Activated B cell treated with CpG ODN at 0.5 μM for 24 hours (primary cell): ENCODE measurements at regions of chr14 and their contacts with region 1.

Region 1: DNA sequence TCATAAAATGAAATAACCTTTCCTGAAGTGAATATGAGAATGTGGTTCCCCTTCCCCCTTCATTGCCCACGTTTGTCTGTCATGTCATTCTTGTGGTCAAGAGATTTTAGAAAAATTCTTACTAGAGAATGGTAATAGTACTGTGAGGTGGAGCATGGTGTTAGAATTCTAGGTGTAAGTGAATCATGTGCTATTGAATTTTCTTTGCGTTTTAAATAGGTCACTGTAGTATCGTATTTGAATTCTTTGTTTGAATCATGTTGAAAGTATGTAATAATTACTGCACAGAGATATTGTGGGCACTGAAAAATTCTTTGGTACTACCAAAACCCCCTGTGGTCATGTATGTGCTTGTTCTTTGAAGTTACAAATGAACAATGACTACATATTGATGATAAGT is 49.9 kb downstream of the FUT8 start:
- DNase-seq: no peak
- ATAC-seq: peak; percentile 53
- H3K4me3 Mint-ChIP-seq: peak overlapping the region; percentile 50
- H3K27ac Mint-ChIP-seq: peak overlapping the region; percentile 85
- H3K4me1 Mint-ChIP-seq: peaks cover 51% of the 10 kb centered on the region
- H3K27me3 Mint-ChIP-seq: no peaks in the 10 kb centered on the region
- CTCF ChIP-seq: no peak

Region 2: DNA sequence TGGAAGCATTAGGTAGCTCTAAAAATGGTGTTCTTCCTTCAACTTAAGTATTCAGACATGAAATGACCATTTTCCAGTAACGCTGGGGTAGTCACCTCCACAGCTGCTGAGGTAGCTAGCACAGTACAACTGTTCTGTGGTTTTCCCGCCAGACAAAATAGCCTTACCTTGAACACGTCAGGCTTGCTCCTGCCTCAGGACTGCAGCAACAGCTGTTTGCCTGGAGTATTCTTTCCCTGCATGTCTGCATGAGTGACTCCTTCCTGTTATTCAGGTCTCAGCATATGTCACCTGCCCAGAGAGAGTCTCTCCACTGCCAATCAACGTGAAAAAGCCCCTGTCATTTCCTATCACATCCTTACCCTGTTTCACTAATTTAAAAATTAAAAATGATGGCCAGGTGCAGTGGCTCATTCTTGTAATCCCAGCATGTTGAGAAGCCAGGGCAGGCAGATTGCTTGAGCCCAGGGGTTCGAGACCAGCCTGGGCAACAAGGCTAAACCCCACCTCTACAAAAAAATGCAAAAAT is 1858.6 kb before region 1 on chr14:
- CTCF ChIA-PET with region 1: no interaction called
- POLR2A ChIA-PET with region 1: no interaction called
- intact Hi-C with region 1: no loop called
- DNase-seq: no peak
- ATAC-seq: no peak
- H3K4me3 Mint-ChIP-seq: no peak overlapping the region
- H3K27ac Mint-ChIP-seq: no peak overlapping the region
- H3K4me1 Mint-ChIP-seq: peaks cover 7% of the 10 kb centered on the region
- H3K27me3 Mint-ChIP-seq: no peaks in the 10 kb centered on the region
- CTCF ChIP-seq: no peak

Region 3: GRCh38 chr14:65421201-65421981 is 41.0 kb before region 1 on chr14:
- CTCF ChIA-PET with region 1: no interaction called
- POLR2A ChIA-PET with region 1: no interaction called
- intact Hi-C with region 1: no loop called
- DNase-seq: no peak
- ATAC-seq: no peak
- H3K4me3 Mint-ChIP-seq: no peak overlapping the region
- H3K27ac Mint-ChIP-seq: peak overlapping the region; percentile 50
- H3K4me1 Mint-ChIP-seq: peaks cover 43% of the 10 kb centered on the region
- H3K27me3 Mint-ChIP-seq: no peaks in the 10 kb centered on the region
- CTCF ChIP-seq: no peak

Region 4: DNA sequence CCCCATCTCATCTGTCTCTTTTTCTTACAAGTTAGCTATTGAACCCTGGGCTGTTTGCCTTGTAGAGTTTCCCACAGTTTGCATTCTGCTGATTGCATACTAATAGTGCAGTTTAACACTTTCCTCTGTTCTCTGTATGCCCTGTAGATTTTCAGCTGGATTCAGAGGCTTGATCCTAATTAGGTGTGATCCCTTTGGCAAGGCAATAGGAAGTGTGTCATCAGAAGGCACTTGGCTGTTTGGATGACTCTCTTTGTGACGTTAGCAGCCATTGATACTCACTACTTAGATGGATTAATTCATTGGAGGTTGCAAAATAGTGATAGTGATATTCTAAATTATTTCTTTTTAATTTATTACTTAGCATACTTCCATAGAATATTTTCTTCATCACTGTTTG is 16.3 kb before region 1 on chr14:
- CTCF ChIA-PET with region 1: no interaction called
- POLR2A ChIA-PET with region 1: interaction called, 3 read pairs
- intact Hi-C with region 1: loop called (anchors 2 kb)
- DNase-seq: no peak
- ATAC-seq: no peak
- H3K4me3 Mint-ChIP-seq: no peak overlapping the region
- H3K27ac Mint-ChIP-seq: no peak overlapping the region
- H3K4me1 Mint-ChIP-seq: peaks cover 23% of the 10 kb centered on the region
- H3K27me3 Mint-ChIP-seq: no peaks in the 10 kb centered on the region
- CTCF ChIP-seq: no peak

Region 5: DNA sequence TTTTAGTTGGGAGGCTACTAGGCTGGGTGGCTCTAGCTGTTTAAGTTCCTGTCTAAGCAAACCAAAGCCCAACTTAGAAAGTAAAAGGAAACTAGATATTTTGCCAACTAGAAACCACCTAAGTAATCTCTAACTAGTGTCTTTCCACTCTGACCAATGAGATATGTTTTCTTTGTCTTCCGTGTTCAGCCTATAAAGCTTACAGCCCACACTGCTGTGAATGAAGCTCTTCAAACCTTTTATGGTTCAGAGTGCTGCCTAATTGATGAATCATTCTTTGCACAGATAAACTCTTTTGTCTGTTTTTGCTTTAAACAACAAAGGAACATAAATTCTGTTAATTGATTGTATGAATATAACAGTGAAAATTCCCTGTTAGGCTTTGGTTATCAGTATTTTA is 16.2 kb after region 1 on chr14:
- CTCF ChIA-PET with region 1: no interaction called
- POLR2A ChIA-PET with region 1: interaction called, 3 read pairs
- intact Hi-C with region 1: loop called (anchors 2 kb)
- DNase-seq: no peak
- ATAC-seq: peak; percentile 38
- H3K4me3 Mint-ChIP-seq: no peak overlapping the region
- H3K27ac Mint-ChIP-seq: no peak overlapping the region
- H3K4me1 Mint-ChIP-seq: peaks cover 80% of the 10 kb centered on the region
- H3K27me3 Mint-ChIP-seq: no peaks in the 10 kb centered on the region
- CTCF ChIP-seq: no peak